PC-9 (cell line): ENCODE measurements at regions of chr15 and their contacts with region 1.

Region 1: DNA sequence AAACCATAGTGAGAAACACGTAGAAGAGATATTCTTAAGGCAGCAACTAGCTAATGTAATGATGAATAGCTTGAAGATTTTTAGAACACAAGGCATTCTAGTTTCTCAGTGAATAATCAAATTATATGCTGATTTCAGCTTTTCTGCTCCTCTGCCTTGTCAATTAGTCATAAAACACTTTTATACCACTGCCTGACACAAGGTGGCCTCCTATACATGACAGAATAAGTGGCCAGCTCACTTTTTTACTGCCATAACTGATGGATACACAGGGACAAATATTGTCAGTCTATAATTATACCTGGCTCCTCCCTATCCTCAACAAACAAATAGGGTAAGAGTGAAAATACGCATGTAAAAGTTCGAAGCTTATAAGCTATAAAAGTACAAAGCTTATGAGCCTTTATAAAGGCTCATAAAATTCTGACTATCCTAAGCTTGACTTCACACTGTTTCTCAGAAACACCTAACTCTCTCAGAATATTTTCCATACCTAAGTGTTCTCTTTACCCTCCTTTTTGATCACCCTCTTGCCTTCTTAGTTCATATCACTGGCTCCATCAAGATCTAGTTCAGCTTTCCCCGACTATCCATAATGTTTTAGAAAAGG is 81.6 kb downstream of the HERC1 start:
- DNase-seq: peak in 1 of 2 experiments; percentile 11
- H3K4me3 ChIP-seq: no peak overlapping the region
- H3K27ac ChIP-seq: no peak overlapping the region
- H3K4me1 ChIP-seq: no peaks in the 10 kb centered on the region
- H3K27me3 ChIP-seq: no peaks in the 10 kb centered on the region
- CTCF ChIP-seq: peak; percentile 73

Region 2: GRCh38 chr15:63553388-63553791 is 198.8 kb before region 1 on chr15:
- CTCF ChIA-PET with region 1: no interaction called
- POLR2A ChIA-PET with region 1: no interaction called
- intact Hi-C with region 1: no loop called
- DNase-seq: no peak
- H3K4me3 ChIP-seq: no peak overlapping the region
- H3K27ac ChIP-seq: no peak overlapping the region
- H3K4me1 ChIP-seq: no peaks in the 10 kb centered on the region
- H3K27me3 ChIP-seq: no peaks in the 10 kb centered on the region
- CTCF ChIP-seq: no peak

Region 3: DNA sequence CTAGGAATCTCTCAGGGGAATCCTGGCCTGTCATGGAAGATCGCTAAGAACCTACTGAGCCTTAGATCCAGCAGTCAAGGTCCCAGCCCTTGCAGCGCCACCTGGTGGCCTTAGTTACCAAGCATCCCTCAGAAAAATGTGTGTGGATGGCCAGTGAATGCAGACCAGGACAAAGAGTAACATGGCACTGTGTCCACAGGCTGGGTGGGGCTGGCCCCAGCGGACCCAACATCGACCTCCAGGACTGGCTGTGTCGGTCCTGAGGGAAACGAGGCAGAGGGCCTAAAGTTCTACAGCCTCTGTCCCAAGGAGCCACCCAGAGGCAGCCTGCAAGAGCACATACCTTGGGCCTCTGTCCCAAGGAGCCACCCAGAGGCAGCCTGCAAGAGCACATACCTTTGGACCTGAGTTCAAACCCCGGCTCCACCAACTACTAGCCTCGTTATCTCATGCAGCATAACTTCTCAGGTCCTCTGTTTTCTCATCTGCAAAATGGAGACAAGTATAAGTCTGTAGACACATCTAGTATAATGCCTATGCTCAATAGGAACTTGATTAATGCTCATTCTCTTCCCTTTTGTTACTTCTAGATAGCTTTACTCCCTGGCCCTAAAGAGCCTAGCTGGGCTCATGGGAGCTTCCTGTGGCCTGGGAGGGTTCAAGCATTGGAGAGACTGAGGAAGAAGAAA is 139.0 kb after region 1 on chr15:
- CTCF ChIA-PET with region 1: interaction called, 8 read pairs
- POLR2A ChIA-PET with region 1: interaction called, 3 read pairs
- intact Hi-C with region 1: loop called (anchors 1 kb)
- DNase-seq: peak; percentile 51 to 75
- H3K4me3 ChIP-seq: no peak overlapping the region
- H3K27ac ChIP-seq: no peak overlapping the region
- H3K4me1 ChIP-seq: peaks cover 13% of the 10 kb centered on the region
- H3K27me3 ChIP-seq: no peaks in the 10 kb centered on the region
- CTCF ChIP-seq: peak; percentile 84

Region 4: DNA sequence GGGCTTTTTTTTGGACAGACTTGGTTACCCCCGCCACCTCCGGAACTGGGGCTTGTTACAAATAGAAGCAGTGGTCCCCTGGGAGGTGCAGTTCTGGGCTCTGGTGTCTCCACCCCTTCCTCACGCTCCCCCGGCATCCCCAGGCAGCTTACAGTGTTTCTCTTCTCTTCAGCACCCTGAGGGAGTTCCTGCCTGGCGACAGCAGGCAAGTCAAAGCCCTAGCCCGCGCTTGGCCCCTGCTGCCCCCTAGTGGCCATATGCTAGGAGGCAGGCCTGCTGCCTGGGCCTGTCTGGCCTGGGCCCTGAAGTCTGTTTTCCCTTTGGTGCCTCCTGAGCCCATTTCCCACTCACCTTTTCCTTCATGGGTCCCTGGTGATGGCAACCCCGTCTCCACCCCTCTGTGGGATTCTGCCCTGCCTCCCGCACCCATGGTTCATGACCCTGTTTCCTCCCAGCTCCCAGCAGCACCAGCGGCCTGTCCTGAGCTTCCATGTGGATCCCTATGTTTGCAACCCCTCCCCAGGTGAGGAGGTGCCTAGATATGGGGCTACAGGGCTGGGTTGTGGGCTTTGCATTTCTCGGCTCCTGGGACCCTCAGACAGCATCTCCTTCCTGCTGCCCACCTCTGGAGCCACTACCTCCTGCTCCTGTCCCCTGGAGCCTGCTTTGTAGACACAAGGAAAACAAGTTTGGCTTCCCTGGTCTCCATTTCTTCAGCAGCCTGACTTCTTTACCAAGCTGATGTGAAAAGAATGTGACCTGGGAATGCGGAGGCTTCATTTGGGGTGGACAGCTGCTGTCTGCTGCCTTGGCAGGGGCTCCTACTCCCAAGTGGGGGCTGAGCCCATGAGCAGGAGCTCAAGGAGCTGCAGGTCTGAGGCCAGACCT is 401.5 kb after region 1 on chr15:
- CTCF ChIA-PET with region 1: interaction called, 3 read pairs
- POLR2A ChIA-PET with region 1: no interaction called
- intact Hi-C with region 1: loop called (anchors 10 kb)
- DNase-seq: peak; percentile 72 to 89
- H3K4me3 ChIP-seq: no peak overlapping the region
- H3K27ac ChIP-seq: no peak overlapping the region; the same call in 1 of the 2 replicates
- H3K4me1 ChIP-seq: no peaks in the 10 kb centered on the region
- H3K27me3 ChIP-seq: no peaks in the 10 kb centered on the region
- CTCF ChIP-seq: peak; percentile 90